GM13977 (cell line): ENCODE measurements at regions of chr2 and their contacts with region 1.

Region 1: DNA sequence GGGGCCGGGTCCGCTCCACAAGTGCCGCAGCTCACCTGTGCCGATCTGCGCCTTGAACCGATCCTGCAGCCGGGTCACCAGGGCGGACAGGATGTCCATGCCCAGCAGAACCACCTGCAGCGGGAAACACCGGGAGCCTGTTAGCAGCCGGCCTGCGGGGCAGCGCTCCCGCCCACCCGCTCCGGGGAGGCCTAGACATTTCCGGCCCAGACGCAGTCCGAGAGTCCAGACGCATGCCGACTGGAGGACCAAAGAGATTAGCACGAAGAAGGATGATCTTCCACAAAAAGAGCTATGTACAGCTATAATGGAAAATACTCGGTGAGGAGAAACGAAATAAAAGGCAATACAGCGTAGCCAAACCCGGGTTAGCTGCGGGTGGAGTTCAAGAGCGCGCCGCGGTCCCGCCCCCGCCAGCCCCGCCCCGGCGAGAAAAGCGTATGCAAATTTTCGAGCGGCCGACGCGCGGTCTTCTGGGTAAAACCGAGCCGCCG is 421 bp upstream of the RNU4ATAC start:
- DNase-seq: peak; percentile 84
- CTCF ChIP-seq: no peak

Region 2: DNA sequence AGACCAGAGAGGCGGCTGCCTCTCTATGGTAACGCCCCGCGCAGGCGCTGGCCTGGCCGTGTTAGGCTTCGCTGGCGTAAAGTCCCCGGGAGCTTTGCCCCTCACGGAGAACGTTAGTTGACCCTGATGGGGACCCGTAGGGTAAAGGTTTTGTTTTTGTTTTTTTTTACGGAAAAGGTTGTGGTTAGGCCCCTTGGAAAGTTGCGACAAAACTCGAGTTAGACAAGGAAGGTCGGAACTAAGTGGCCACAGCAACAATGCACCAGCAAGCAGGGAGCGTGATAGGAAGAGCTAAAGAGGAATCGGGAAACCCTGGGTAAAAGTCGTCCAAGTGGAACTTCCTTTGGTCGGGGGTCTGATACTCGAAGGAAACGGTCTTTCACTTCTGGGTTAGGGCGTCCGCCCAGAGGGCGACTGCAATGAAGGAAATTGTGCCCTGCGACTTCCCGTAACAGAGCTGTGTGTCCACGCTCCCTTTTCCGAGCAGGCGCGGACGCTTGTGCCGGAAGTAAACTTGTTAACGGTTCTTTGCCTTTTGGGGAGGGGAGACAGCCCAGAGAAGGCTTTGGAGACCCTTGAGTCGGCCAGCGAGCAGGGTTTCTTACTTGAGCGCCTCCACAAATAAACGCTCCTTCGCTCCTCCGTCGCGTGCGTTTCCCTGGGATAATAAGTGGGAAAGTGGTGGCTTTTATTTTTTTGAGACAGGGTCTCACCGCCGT is 119.5 kb after region 1 on chr2:
- in situ Hi-C with region 1: loop called (anchors 10 kb)
- DNase-seq: peak; percentile 84
- CTCF ChIP-seq: no peak

Region 3: GRCh38 chr2:121710470-121711170 is 180.4 kb after region 1 on chr2:
- in situ Hi-C with region 1: loop called (anchors 10 kb)
- DNase-seq: no peak
- CTCF ChIP-seq: no peak